ENCODE measurements at regions of chr2 and their contacts with region 1.

Region 1: GRCh38 chr2:113965644-113966043 is 75.8 kb downstream of the ACTR3 start:
- DNase-seq: peak; percentile 53
- ATAC-seq: peak; percentile 83
- H3K4me3 Mint-ChIP-seq: no peak overlapping the region
- H3K27ac Mint-ChIP-seq: no peak overlapping the region
- H3K4me1 Mint-ChIP-seq: peaks cover 19% of the 10 kb centered on the region
- H3K27me3 Mint-ChIP-seq: no peaks in the 10 kb centered on the region

Region 2: DNA sequence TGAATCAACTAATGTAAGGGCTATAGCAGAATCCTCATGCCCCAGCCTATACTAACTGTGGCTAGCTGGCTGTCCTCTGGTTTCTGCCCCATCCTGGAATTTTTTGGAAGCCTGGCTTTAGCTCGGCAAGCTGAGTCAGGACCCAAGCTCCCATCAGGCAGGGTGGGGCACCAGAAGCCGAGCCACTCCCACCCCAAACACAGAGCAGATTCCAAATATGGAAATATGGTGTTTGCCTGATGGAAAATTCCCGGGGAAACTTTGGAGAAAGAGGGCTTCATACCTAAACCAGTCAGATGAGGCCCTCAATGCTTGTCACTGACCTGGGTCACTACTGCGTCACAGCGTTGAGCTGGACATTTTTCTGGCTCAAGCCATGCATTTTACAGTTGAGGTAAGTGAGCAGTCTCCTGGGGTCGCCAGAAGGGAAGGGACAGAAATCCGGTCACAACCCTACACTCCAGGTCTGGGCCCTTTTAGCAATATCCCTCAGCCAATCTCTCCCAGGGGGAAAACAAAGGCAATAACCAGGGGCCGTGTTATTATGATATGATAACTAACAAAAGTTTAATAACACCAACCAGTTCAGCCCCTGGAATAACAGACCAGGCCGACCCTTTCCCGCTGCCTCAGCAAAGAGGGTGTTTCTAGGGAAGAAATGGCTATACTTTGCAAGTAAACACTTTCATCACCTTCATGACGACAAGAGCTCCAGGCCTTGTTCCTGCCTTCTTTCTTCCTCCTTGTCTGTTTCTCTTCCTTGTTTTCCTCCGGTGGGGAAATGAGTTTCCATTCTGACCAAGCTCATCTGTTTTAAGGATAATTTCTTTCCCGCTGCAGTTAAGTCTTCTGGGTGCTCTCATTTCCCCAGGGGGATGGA is 754.2 kb before region 1 on chr2:
- CTCF ChIA-PET with region 1: no interaction called
- POLR2A ChIA-PET with region 1: no interaction called
- intact Hi-C with region 1: no loop called
- DNase-seq: no peak
- ATAC-seq: no peak
- H3K4me3 Mint-ChIP-seq: no peak overlapping the region
- H3K27ac Mint-ChIP-seq: no peak overlapping the region
- H3K4me1 Mint-ChIP-seq: no peaks in the 10 kb centered on the region
- H3K27me3 Mint-ChIP-seq: no peaks in the 10 kb centered on the region

Region 3: GRCh38 chr2:113351375-113352355 is 614.0 kb before region 1 on chr2:
- CTCF ChIA-PET with region 1: no interaction called
- POLR2A ChIA-PET with region 1: no interaction called
- intact Hi-C with region 1: no loop called
- DNase-seq: no peak
- ATAC-seq: no peak
- H3K4me3 Mint-ChIP-seq: no peak overlapping the region
- H3K27ac Mint-ChIP-seq: no peak overlapping the region
- H3K4me1 Mint-ChIP-seq: no peaks in the 10 kb centered on the region
- H3K27me3 Mint-ChIP-seq: peaks cover 2% of the 10 kb centered on the region

Region 4: GRCh38 chr2:113901943-113902342 is 63.7 kb before region 1 on chr2:
- CTCF ChIA-PET with region 1: interaction called, 3 read pairs
- POLR2A ChIA-PET with region 1: no interaction called
- intact Hi-C with region 1: loop called in 1 of 2 experiments (anchors 5 kb)
- DNase-seq: no peak
- ATAC-seq: no peak
- H3K4me3 Mint-ChIP-seq: peak overlapping the region; percentile 26
- H3K27ac Mint-ChIP-seq: peak overlapping the region; percentile 48
- H3K4me1 Mint-ChIP-seq: peaks cover 90% of the 10 kb centered on the region
- H3K27me3 Mint-ChIP-seq: no peaks in the 10 kb centered on the region

Region 5: GRCh38 chr2:113940891-113941290 is 24.8 kb before region 1 on chr2:
- CTCF ChIA-PET with region 1: interaction called, 11 read pairs
- POLR2A ChIA-PET with region 1: no interaction called
- intact Hi-C with region 1: no loop called
- DNase-seq: no peak
- ATAC-seq: no peak
- H3K4me3 Mint-ChIP-seq: no peak overlapping the region
- H3K27ac Mint-ChIP-seq: no peak overlapping the region
- H3K4me1 Mint-ChIP-seq: no peaks in the 10 kb centered on the region
- H3K27me3 Mint-ChIP-seq: no peaks in the 10 kb centered on the region

Region 6: DNA sequence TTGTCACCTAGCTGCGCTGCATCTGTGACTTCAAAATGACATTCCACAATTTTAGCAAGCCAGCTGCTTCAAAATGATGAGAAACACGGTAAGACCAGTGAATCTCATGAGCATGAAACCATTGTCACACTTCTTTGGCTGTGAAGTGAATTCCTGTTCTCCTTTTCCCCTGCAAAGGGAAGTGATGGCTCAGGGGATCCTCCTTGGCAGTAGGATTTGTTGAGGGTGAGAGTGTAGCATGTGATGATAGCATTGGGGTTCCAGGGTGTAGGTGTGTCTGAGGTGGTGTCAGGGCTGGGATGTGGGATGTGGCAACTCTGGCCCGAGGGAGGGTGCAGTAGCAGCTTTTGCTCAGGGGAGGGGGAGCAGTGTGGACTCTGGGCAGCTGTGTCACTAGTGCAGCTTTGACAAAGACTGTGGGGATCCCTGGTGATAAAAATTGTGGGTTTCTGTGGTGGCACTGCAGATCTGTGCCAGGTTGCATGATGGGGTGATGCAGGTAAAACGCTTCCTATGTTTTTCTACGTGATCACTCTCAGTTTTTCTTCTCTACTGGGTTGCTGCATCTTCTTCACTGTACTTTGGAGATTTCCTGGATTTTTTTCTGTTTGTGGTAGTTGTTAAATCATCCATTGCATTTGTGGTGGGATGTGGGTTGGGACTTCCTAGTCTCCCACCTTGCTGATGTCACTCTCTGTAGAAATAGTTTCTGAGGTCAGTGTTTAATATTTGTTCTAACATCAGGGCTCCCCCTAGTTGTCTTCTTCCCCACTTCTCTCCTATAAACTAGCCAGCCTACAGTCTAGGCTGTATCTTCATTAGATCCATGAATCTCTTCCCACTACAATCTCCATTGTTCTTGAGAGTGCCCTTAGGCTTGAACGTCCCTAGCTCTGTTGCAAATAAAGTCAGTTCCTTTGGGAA is 31.3 kb after region 1 on chr2:
- CTCF ChIA-PET with region 1: no interaction called
- POLR2A ChIA-PET with region 1: no interaction called
- intact Hi-C with region 1: no loop called
- DNase-seq: no peak
- ATAC-seq: no peak
- H3K4me3 Mint-ChIP-seq: no peak overlapping the region
- H3K27ac Mint-ChIP-seq: no peak overlapping the region
- H3K4me1 Mint-ChIP-seq: no peaks in the 10 kb centered on the region
- H3K27me3 Mint-ChIP-seq: no peaks in the 10 kb centered on the region

Measured in activated CD4-positive, alpha-beta T cell treated with anti-CD3 and anti-CD28 coated beads for 36 hours (primary cell).